Calu3 (cell line): ENCODE measurements at regions of chr3 and their contacts with region 1.

Region 1: GRCh38 chr3:138459619-138460535 is 25.5 kb downstream of the ESYT3 start:
- DNase-seq: no peak
- H3K4me3 Mint-ChIP-seq: no peak overlapping the region
- H3K27ac Mint-ChIP-seq: no peak overlapping the region
- H3K4me1 Mint-ChIP-seq: no peaks in the 10 kb centered on the region
- H3K27me3 Mint-ChIP-seq: no peaks in the 10 kb centered on the region
- CTCF ChIP-seq: no peak

Region 2: DNA sequence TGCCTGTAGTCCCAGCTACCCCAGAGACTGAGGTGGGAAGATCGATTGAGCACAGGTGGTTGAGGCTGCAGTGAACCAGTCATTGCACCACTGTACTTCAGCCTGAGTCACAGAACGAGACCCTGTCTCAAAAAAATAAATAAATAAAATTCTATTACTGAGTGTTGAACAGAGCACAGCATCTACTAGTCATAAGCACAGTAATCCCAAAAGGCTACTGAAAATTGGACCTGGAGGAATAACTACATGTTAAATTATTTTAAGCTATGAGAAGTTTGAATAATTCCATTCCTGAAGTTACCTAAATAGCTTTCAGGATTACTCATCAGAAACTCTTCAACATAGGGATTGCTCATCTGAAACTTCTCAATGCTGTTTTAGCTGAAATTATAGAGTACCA is 229.4 kb before region 1 on chr3:
- CTCF ChIA-PET with region 1: no interaction called
- intact Hi-C with region 1: no loop called
- DNase-seq: no peak
- H3K4me3 Mint-ChIP-seq: no peak overlapping the region
- H3K27ac Mint-ChIP-seq: no peak overlapping the region
- H3K4me1 Mint-ChIP-seq: no peaks in the 10 kb centered on the region
- H3K27me3 Mint-ChIP-seq: no peaks in the 10 kb centered on the region
- CTCF ChIP-seq: no peak

Region 3: GRCh38 chr3:138417559-138417982 is 42.3 kb before region 1 on chr3:
- CTCF ChIA-PET with region 1: interaction called, 3 read pairs
- intact Hi-C with region 1: loop called (anchors 5 kb)
- DNase-seq: peak; percentile 94
- H3K4me3 Mint-ChIP-seq: no peak overlapping the region
- H3K27ac Mint-ChIP-seq: no peak overlapping the region
- H3K4me1 Mint-ChIP-seq: no peaks in the 10 kb centered on the region
- H3K27me3 Mint-ChIP-seq: peaks cover 59% of the 10 kb centered on the region
- CTCF ChIP-seq: peak; percentile 90